ENCODE measurements at regions of chr2 and their contacts with region 1.

Region 1: GRCh38 chr2:19649785-19650380 is 251.9 kb downstream of the TTC32 start:
- DNase-seq: peak in 1 of 2 donors; percentile 38
- ATAC-seq: peak; percentile 60 to 95 (median 90)
- H3K4me3 ChIP-seq: no peak overlapping the region
- H3K27ac ChIP-seq: peak overlapping the region in 3 of 10 donors; percentile 16 to 78 (median 54)
- H3K4me1 ChIP-seq: peaks cover 0 to 18% (median 0%) of the 10 kb centered on the region in 9 donors
- H3K27me3 ChIP-seq: no peaks in the 10 kb centered on the region
- CTCF ChIP-seq: no peak

Region 2: GRCh38 chr2:19607931-19608771 is 41.7 kb before region 1 on chr2:
- intact Hi-C with region 1: no loop called
- DNase-seq: no peak
- ATAC-seq: peak in 1 of 8 donors; percentile 27
- H3K4me3 ChIP-seq: no peak overlapping the region
- H3K27ac ChIP-seq: no peak overlapping the region
- H3K4me1 ChIP-seq: no peaks in the 10 kb centered on the region
- H3K27me3 ChIP-seq: no peaks in the 10 kb centered on the region
- CTCF ChIP-seq: no peak

Region 3: GRCh38 chr2:19682493-19682892 is 32.6 kb after region 1 on chr2:
- intact Hi-C with region 1: loop called in 2 of 10 experiments (anchors 1 to 2 kb)
- DNase-seq: no peak
- ATAC-seq: no peak
- H3K4me3 ChIP-seq: no peak overlapping the region
- H3K27ac ChIP-seq: no peak overlapping the region
- H3K4me1 ChIP-seq: peaks cover 0 to 5% (median 2%) of the 10 kb centered on the region in 9 donors
- H3K27me3 ChIP-seq: no peaks in the 10 kb centered on the region
- CTCF ChIP-seq: no peak